Dorsolateral prefrontal cortex (tissue), 120 donors: ENCODE measurements at regions of chr1 and their contacts with region 1.

Region 1: DNA sequence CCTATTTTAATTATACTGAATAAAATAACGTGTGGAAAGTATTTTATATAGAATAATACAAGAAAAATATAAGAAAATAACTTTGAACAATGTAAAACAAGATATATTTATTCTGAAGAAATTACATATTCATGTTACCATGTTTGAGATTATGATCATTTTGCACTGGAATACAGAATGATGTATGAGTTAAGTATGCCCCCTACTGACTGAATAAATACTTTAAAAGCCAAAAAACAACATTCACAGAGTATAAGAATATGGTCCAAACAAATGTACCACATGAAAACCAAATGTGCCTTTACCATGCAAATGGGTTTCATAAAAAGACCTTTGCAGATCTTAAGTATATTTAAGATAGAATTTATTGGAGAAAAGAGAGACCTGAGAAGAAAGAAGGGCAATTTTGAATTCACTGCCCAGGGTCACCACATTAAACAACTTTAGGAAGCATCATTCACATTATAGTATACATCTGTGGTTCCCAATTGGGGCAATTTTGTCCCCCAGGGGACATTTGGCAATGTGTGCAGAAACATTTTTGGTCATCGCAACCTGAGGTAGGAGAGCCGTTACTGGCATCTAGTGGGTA is 136.6 kb upstream of the GFI1 start:
- DNase-seq: no peak
- H3K4me3 ChIP-seq: no peak overlapping the region
- H3K27ac ChIP-seq: no peak overlapping the region
- H3K27me3 ChIP-seq: no peaks in the 10 kb centered on the region
- CTCF ChIP-seq: peak; percentile 25 to 76 (median 54)

Region 2: GRCh38 chr1:92310185-92310597 is 313.1 kb before region 1 on chr1:
- intact Hi-C with region 1: loop called in 1 of 2 experiments (anchors 10 kb)
- DNase-seq: no peak
- H3K4me3 ChIP-seq: no peak overlapping the region
- H3K27ac ChIP-seq: no peak overlapping the region
- H3K27me3 ChIP-seq: no peaks in the 10 kb centered on the region
- CTCF ChIP-seq: peak; percentile 32 to 77 (median 60)